A549 (cell line): ENCODE measurements at regions of chr4 and their contacts with region 1.

Region 1: DNA sequence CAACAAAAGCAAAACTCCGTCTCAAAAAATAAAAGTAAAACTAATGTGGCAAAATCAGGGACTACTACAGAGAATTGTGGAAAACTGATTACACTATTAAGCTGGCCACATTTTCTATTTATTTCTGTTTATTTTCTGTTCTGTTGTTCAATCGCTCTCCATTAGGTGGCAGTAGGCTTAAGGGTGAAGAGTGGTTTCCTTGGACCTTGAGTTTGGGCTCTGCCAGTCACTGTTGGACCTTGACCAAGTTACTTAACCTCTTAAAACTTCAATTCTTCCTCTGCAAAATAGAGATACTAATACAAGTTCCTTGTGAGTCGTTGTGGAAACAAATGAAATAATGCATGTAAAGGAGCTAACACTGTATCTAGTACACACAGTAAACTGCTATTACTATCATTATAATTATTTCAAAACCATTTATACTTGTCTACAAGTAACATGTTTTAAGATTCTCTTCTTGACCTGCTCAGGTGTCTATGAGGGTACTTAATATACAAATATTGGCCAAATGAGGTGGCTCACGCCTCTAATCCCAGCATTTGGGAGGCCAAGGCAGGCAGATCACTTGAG is 15.2 kb downstream of the HSD17B11 start:
- DNase-seq: peak in 1 of 2 experiments; percentile 72
- ATAC-seq: peak; percentile 47 to 72; a peak in 3 of 6 replicates
- H3K4me3 ChIP-seq: no peak overlapping the region
- H3K27ac ChIP-seq: no peak overlapping the region
- H3K4me1 ChIP-seq: peaks cover 17% of the 10 kb centered on the region
- CTCF ChIP-seq: peak; percentile 54
- EP300 ChIP-seq: no peak
- POLR2A ChIP-seq: no peak
- RAD21 ChIP-seq: peak; percentile 63 to 66

Region 2: GRCh38 chr4:86706923-86707597 is 668.7 kb before region 1 on chr4:
- CTCF ChIA-PET with region 1: no interaction called
- POLR2A ChIA-PET with region 1: no interaction called
- DNase-seq: no peak
- ATAC-seq: no peak
- H3K4me3 ChIP-seq: no peak overlapping the region
- H3K27ac ChIP-seq: no peak overlapping the region
- H3K4me1 ChIP-seq: no peaks in the 10 kb centered on the region
- CTCF ChIP-seq: no peak
- EP300 ChIP-seq: no peak
- POLR2A ChIP-seq: no peak
- RAD21 ChIP-seq: no peak

Region 3: GRCh38 chr4:86961605-86962295 is 414.1 kb before region 1 on chr4:
- CTCF ChIA-PET with region 1: no interaction called
- POLR2A ChIA-PET with region 1: no interaction called
- DNase-seq: peak in 1 of 2 experiments; percentile 11
- ATAC-seq: peak; percentile 45 to 56; a peak in 3 of 6 replicates
- H3K4me3 ChIP-seq: no peak overlapping the region
- H3K27ac ChIP-seq: peak overlapping the region in 1 of 2 experiments; percentile 58; a peak in 3 of 6 replicates
- H3K4me1 ChIP-seq: peaks cover 78% of the 10 kb centered on the region
- CTCF ChIP-seq: no peak
- EP300 ChIP-seq: no peak
- POLR2A ChIP-seq: no peak
- RAD21 ChIP-seq: no peak

Region 4: DNA sequence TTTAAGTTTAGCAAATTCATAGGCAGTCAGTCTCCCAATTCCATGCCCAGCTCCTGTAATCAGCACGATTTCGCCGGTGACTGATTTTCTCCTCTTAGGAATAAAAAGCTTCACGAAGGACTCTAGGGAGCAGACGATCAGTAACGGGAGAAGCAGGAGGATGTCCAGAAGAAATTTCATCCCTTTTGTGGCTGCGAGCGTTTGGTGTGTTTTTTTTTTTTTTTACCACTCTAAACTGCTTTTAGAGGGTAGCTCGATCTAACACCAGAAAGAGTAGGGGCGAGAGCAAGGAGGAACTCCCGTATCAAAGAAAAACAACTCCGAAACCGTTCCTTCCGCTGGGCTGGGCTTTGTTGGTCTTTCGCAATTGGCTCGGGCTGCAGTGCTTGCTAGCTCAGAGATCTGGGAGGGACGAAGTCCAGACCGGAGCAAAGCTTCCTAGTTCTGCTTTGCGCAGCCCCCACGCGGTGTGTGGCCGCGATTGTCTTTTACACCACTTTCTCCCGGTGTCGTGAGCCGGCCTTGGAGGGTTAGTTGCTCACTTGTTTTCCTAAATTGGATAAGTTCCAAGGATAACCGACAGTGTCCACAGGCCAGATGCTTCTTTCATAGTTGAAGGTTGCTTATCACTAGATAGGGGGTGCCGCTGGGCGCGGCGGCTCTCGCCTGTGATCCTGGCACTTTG is 15.2 kb after region 1 on chr4 and contains the start of gene HSD17B11:
- CTCF ChIA-PET with region 1: interaction called, 17 read pairs
- POLR2A ChIA-PET with region 1: interaction called, 4 read pairs
- DNase-seq: peak; percentile 92 to 94
- ATAC-seq: peak; percentile 98 to 99
- H3K4me3 ChIP-seq: peak within 1 kb of the TSS; percentile 69
- H3K27ac ChIP-seq: peak within 1 kb of the TSS; percentile 90 to 93
- H3K4me1 ChIP-seq: peaks cover 7% of the 10 kb centered on the region; the same call in 1 of the 3 replicates
- CTCF ChIP-seq: no peak
- EP300 ChIP-seq: no peak
- POLR2A ChIP-seq: peak; percentile 54
- RAD21 ChIP-seq: no peak
- polyA plus RNA-seq, gene HSD17B11: 85.2 and 113 TPM in 2 replicates

Region 5: DNA sequence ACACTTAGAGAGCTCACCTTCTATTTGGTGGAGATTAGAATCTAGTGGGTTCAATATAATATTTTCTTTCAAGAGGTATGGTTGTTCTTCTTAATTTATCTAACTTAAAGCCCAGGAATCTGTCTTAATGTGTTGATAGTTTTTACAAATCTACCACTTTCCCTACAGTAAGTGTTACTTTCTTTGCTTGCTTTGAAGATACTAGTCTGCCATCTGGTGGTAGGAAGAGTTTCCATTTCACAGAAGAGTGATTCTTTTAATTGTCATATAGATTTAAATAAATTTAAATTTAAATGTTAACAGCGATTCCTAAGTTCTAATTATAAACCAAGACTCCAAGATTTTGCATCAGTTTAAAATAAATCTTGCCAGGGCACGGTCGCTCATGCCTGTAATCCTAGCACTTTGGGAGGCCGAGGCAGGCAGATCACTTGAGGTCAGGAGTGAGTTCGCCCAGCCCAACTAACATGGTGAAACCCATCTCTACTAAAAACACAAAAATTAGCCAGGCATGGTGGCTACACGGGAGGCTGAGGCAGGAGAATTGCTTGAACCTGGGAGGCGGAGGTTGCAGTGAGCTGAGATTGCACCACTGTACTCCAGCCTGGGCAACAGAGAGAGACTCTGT is 90.0 kb after region 1 on chr4:
- CTCF ChIA-PET with region 1: interaction called, 22 read pairs
- POLR2A ChIA-PET with region 1: no interaction called
- DNase-seq: peak; percentile 6 to 54
- ATAC-seq: peak in 1 of 2 experiments; percentile 54; a peak in 2 of 6 replicates
- H3K4me3 ChIP-seq: no peak overlapping the region
- H3K27ac ChIP-seq: no peak overlapping the region
- H3K4me1 ChIP-seq: peaks cover 8% of the 10 kb centered on the region; the same call in 1 of the 3 replicates
- CTCF ChIP-seq: peak; percentile 80
- EP300 ChIP-seq: no peak
- POLR2A ChIP-seq: no peak
- RAD21 ChIP-seq: peak; percentile 75